GM18951 (cell line): ENCODE measurements at regions of chr2 and their contacts with region 1.

Region 1: DNA sequence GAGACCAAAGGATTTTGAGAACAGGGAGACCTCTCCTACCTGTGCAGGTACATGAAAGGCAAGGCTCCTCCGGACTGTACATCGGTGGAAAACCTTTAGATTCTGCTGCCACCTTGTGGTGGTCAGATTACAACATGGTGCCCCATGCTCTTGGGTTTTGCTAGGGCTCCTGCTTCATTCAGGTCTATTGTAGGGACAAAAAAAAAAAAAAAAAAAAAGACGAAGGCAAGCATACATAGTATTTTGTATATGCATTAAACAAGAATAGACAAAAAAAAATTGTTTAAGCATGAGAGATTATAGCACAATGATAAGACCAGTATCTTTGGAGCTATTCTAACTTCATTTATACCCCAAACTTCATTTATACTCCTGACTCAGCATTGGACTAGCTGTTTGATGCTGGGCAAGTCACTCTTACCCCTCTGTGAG is 27.4 kb upstream of the SPR start:
- POLR2A ChIP-seq: no peak

Region 2: GRCh38 chr2:72778410-72778809 is 81.4 kb before region 1 on chr2:
- in situ Hi-C with region 1: loop called (anchors 5 kb)
- POLR2A ChIP-seq: no peak

Region 3: GRCh38 chr2:73503992-73504570 is 644.2 kb after region 1 on chr2:
- in situ Hi-C with region 1: no loop called
- POLR2A ChIP-seq: no peak